Aorta (tissue), 5 donors: ENCODE measurements at regions of chr17 and their contacts with region 1.

Region 1: GRCh38 chr17:44170499-44171201 is at the start of gene ASB16:
- DNase-seq: peak in 1 of 2 donors; percentile 61
- ATAC-seq: peak; percentile 65
- H3K4me3 ChIP-seq: peak within 1 kb of the TSS in 1 of 2 donors; percentile 16
- H3K27ac ChIP-seq: peak within 1 kb of the TSS; percentile 3 to 11
- H3K4me1 ChIP-seq: no peaks in the 10 kb centered on the region
- H3K27me3 ChIP-seq: no peaks in the 10 kb centered on the region
- total RNA-seq, gene ASB16: 1.4 to 2.1 TPM

Region 2: DNA sequence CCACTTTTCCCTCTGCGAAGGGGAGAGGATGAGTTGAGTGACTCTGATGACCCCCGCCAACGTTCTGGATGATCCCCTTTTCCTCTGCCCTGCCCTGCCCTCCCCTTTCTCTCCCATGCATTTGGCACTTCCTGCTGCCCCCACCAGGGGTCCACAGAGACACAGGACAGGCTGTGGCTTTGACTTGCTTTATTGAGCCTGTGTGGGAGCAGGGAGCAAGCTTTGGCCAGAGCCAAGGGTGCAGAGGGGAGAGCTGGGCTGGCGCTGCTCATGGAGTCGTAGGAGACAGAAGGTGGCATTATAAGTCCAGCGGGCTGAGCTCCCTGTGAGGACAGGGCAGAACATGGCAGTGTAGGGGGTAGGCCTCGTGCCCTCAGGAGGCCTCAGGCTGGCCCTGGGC is 230.0 kb before region 1 on chr17:
- intact Hi-C with region 1: loop called in 1 of 2 experiments (anchors 5 kb)
- DNase-seq: no peak
- ATAC-seq: no peak
- H3K4me3 ChIP-seq: no peak overlapping the region
- H3K27ac ChIP-seq: no peak overlapping the region
- H3K4me1 ChIP-seq: no peaks in the 10 kb centered on the region
- H3K27me3 ChIP-seq: no peaks in the 10 kb centered on the region

Region 3: GRCh38 chr17:44070455-44071197 is 100.0 kb before region 1 on chr17 and contains the start of gene G6PC3:
- intact Hi-C with region 1: loop called in 1 of 2 experiments (anchors 5 kb)
- DNase-seq: peak; percentile 97
- ATAC-seq: peak; percentile 96
- H3K4me3 ChIP-seq: peak within 1 kb of the TSS; percentile 38 to 44
- H3K27ac ChIP-seq: peak within 1 kb of the TSS in 1 of 2 donors; percentile 54
- H3K4me1 ChIP-seq: no peaks in the 10 kb centered on the region
- H3K27me3 ChIP-seq: no peaks in the 10 kb centered on the region
- total RNA-seq, gene G6PC3: 30.3 to 32.5 TPM

Region 4: GRCh38 chr17:44112284-44113282 is 58.1 kb before region 1 on chr17:
- intact Hi-C with region 1: no loop called
- DNase-seq: peak in 1 of 2 donors; percentile 82
- ATAC-seq: no peak
- H3K4me3 ChIP-seq: no peak overlapping the region
- H3K27ac ChIP-seq: peak overlapping the region in 1 of 2 donors; percentile 53
- H3K4me1 ChIP-seq: peaks cover 4 to 6% of the 10 kb centered on the region in 2 donors
- H3K27me3 ChIP-seq: no peaks in the 10 kb centered on the region

Region 5: DNA sequence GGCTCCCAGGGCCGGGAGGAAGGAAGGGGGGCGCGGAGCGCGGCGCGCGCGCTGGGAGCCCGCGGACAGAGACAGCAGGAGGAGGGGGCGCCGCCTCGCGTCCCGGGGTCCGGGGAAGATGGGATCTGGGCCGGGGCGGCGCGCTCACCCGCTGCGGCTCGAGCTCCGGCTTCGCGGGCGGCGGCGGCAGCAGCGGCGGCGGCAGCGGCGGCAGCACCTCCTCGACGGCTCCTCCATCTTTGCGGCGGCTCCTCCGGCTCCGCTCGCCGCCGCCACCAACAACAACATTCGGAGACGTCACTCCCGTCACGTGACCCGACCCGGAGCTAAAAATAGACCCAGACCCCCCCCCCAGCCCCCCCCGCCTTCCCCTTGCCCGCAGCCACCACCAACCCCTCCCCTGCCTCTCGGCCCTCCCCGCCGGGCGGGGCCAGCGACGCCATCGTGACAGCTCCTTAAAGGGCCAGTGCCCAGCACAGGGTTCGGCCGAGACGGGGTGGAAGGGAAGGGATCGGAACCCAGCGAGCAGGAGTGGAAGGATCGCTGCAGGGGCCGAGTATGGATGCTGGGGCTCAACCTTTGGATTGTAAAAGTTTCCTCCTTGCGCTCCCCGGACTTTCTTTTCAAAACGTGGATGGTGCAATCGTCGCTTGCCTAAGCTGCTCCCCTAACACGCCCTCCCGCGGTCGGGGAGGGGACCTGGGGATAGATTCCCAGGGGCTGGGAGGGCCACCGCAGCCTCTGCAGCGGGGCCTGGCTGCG is 47.1 kb before region 1 on chr17 and contains the start of gene HDAC5:
- intact Hi-C with region 1: loop called in 1 of 2 experiments (anchors 1 kb)
- DNase-seq: peak; percentile 98
- ATAC-seq: peak; percentile 98
- H3K4me3 ChIP-seq: peak within 1 kb of the TSS; percentile 96 to 98
- H3K27ac ChIP-seq: peak within 1 kb of the TSS; percentile 69 to 76
- H3K4me1 ChIP-seq: no peaks in the 10 kb centered on the region
- H3K27me3 ChIP-seq: no peaks in the 10 kb centered on the region
- total RNA-seq, gene HDAC5: 69.7 to 82.6 TPM

Region 6: GRCh38 chr17:44141717-44142285 is 28.8 kb before region 1 on chr17 and contains the start of gene HROB:
- intact Hi-C with region 1: loop called in 1 of 2 experiments (anchors 1 kb)
- DNase-seq: peak; percentile 97 to 98
- ATAC-seq: peak; percentile 92
- H3K4me3 ChIP-seq: peak within 1 kb of the TSS; percentile 2 to 18
- H3K27ac ChIP-seq: no peak within 1 kb of the TSS
- H3K4me1 ChIP-seq: no peaks in the 10 kb centered on the region
- H3K27me3 ChIP-seq: no peaks in the 10 kb centered on the region
- total RNA-seq, gene HROB: 0.58 to 1.3 TPM

Region 7: DNA sequence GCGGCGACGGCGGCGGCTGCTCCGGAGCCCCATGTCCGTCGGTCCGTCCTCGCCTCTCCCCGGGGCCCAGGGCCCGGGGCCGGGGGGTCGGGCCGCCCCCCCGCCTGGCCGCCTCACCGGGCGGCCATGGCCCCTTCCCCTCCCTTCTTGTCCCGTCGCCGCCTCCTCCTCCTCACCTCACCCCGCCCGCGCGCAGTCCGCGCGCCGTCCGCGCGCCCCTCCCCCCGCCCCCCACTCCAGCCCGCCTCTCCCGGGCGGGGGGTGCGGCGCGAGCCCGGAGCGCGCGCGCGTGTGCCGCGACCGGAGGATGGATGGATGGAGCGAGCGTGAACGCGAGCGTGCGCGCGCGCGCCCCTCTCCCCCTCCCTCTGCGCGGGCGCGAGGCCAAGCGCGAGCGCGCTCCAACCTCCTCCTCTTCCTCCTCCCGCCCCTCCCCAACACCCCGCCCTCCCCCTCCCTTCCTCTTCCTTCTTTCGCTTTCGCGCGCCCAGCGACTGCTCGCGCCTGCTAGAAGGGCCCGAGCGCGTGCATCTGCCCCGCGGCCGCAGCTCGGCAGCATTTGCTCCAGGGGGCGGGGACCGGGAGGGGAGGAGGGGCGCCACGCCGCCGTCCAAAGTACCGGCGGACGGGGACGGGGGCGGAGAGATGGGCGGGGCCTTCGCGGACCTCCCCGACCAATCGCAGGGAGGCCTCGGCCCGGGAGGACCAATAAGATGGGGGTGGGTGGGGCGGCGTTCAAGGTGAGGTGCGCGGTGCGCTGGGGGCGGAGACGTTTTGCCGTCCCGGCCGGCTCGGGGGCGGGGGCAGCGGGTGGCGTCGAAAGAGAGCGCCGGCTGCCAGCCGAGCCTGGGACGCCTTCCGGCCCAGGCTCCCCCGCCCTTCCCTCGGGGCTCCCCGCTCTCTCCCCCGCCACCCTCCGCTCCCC is 29.2 kb after region 1 on chr17 and contains the start of gene ATXN7L3:
- intact Hi-C with region 1: no loop called
- DNase-seq: peak; percentile 99 to 100
- ATAC-seq: peak; percentile 96
- H3K4me3 ChIP-seq: peak within 1 kb of the TSS; percentile 92 to 99
- H3K27ac ChIP-seq: peak within 1 kb of the TSS; percentile 80 to 84
- H3K4me1 ChIP-seq: no peaks in the 10 kb centered on the region
- H3K27me3 ChIP-seq: no peaks in the 10 kb centered on the region
- total RNA-seq, gene ATXN7L3: 62.9 to 67.5 TPM